A549 (cell line): ENCODE measurements at regions of chr10 and their contacts with region 1.

Region 1: GRCh38 chr10:97612386-97612785 is 20.9 kb downstream of the MORN4 start:
- DNase-seq: peak; percentile 70 to 85
- ATAC-seq: peak; percentile 97 to 98
- H3K4me3 ChIP-seq: no peak overlapping the region
- H3K27ac ChIP-seq: peak overlapping the region; percentile 13 to 75; a peak in 4 of 6 replicates
- H3K4me1 ChIP-seq: peaks cover 17% of the 10 kb centered on the region; the same call in 2 of the 3 replicates
- CTCF ChIP-seq: peak; percentile 85
- EP300 ChIP-seq: no peak
- POLR2A ChIP-seq: no peak
- RAD21 ChIP-seq: peak; percentile 95 to 98

Region 2: GRCh38 chr10:97334370-97335175 is 277.8 kb before region 1 on chr10 and contains the start of gene FRAT2:
- CTCF ChIA-PET with region 1: no interaction called
- POLR2A ChIA-PET with region 1: no interaction called
- DNase-seq: peak; percentile 91 to 96
- ATAC-seq: peak; percentile 86 to 89
- H3K4me3 ChIP-seq: peak within 1 kb of the TSS; percentile 87
- H3K27ac ChIP-seq: peak within 1 kb of the TSS; percentile 95 to 97
- H3K4me1 ChIP-seq: peaks cover 31% of the 10 kb centered on the region
- CTCF ChIP-seq: no peak
- EP300 ChIP-seq: no peak
- POLR2A ChIP-seq: peak; percentile 32; the same call in 1 of the 2 replicates
- RAD21 ChIP-seq: no peak
- polyA plus RNA-seq, gene FRAT2: 4.1 and 4.4 TPM in 2 replicates

Region 3: DNA sequence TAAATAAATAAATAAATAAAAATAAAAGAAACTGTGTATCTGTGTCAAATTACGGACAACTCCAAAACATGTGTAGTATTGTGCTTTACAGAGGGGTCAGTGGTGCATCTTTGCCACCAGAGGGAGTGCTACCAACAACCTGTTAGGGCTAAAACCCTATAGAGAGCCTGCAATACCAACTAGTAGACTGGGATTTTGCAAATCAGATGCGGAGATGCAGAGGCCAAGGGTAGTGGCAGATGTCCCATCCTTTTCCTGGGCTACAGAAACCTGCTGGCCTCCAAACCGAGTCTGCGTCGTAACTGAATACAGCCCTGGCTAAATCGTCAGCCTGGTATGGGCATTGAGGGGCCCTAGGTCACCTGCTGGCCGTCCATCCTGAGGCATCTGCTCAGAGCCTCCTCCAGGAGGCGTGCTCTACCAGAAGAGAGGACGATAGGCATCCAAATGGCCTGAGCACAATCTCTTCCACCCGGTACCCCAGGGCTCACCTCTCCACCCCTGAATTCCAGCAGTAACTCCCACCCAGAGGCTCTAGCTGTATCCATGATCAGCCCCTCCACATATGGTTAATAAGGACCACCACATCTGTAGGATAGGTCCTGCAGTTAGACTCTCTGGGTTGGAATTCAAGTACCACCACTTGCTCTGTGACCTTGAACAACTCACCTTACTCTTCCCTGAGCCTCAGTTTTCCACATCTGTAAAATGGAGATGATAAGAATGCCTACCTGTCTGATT is 205.0 kb before region 1 on chr10:
- CTCF ChIA-PET with region 1: interaction called, 23 read pairs
- POLR2A ChIA-PET with region 1: no interaction called
- DNase-seq: peak; percentile 87 to 93
- ATAC-seq: peak; percentile 99 to 100
- H3K4me3 ChIP-seq: peak overlapping the region; percentile 33; the same call in 2 of the 3 replicates
- H3K27ac ChIP-seq: peak overlapping the region; percentile 29 to 71; a peak in 4 of 6 replicates
- H3K4me1 ChIP-seq: 0 out of 3 replicates have a peak, but pooled peaks cover 4% of the 10 kb centered on the region
- CTCF ChIP-seq: peak; percentile 95
- EP300 ChIP-seq: no peak
- POLR2A ChIP-seq: no peak
- RAD21 ChIP-seq: peak; percentile 55 to 59

Region 4: GRCh38 chr10:97445357-97445721 is 167.0 kb before region 1 on chr10:
- CTCF ChIA-PET with region 1: interaction called, 10 read pairs
- POLR2A ChIA-PET with region 1: no interaction called
- DNase-seq: no peak
- ATAC-seq: peak; percentile 7 to 14; a peak in 4 of 6 replicates
- H3K4me3 ChIP-seq: peak overlapping the region; percentile 79
- H3K27ac ChIP-seq: peak overlapping the region; percentile 80 to 92
- H3K4me1 ChIP-seq: peaks cover 27% of the 10 kb centered on the region
- CTCF ChIP-seq: no peak
- EP300 ChIP-seq: no peak
- POLR2A ChIP-seq: no peak
- RAD21 ChIP-seq: no peak

Region 5: GRCh38 chr10:97463363-97464132 is 148.8 kb before region 1 on chr10:
- CTCF ChIA-PET with region 1: interaction called, 62 read pairs
- POLR2A ChIA-PET with region 1: no interaction called
- DNase-seq: peak; percentile 62 to 63
- ATAC-seq: peak; percentile 67 to 75; a peak in 5 of 6 replicates
- H3K4me3 ChIP-seq: no peak overlapping the region
- H3K27ac ChIP-seq: peak overlapping the region in 1 of 2 experiments; percentile 10; a peak in 1 of 6 replicates
- H3K4me1 ChIP-seq: peaks cover 8% of the 10 kb centered on the region
- CTCF ChIP-seq: peak; percentile 95
- EP300 ChIP-seq: no peak
- POLR2A ChIP-seq: no peak
- RAD21 ChIP-seq: peak; percentile 83 to 84

Region 6: DNA sequence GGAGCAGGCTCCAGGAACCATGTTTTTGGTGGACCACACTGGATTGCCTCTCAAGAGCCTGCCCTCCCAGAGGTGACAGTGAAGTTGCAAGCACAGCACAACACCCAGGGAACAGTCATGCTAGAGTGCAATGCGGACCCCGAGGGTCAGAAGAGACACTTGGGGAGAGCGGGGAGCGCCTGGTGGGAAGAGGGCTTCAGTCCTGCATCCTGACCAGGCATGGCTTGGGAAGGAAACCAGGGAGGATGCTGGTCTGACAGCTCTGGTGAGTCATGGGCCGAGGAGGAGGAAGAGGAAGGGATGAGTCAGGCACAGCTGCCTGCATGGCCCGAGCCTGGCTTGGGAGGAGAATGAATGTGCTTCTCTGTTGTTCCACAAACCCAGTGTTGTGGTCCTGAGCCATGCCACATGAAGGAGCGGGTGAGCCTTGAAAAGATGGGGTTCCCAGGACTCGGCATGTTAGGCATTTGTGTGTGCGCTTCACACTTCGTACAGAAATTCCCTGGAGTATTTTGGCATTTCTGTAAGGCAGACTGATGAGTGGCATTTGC is 69.3 kb before region 1 on chr10:
- CTCF ChIA-PET with region 1: interaction called, 14 read pairs
- POLR2A ChIA-PET with region 1: no interaction called
- DNase-seq: peak; percentile 76 to 95
- ATAC-seq: peak; percentile 69 to 86
- H3K4me3 ChIP-seq: no peak overlapping the region
- H3K27ac ChIP-seq: peak overlapping the region; percentile 86 to 92
- H3K4me1 ChIP-seq: peaks cover 57% of the 10 kb centered on the region
- CTCF ChIP-seq: no peak
- EP300 ChIP-seq: no peak
- POLR2A ChIP-seq: no peak
- RAD21 ChIP-seq: no peak

Region 7: GRCh38 chr10:97601268-97602215 is 10.8 kb before region 1 on chr10:
- CTCF ChIA-PET with region 1: interaction called, 1,048 read pairs
- POLR2A ChIA-PET with region 1: no interaction called
- DNase-seq: no peak
- ATAC-seq: no peak; a peak in 1 of 6 replicates
- H3K4me3 ChIP-seq: no peak overlapping the region
- H3K27ac ChIP-seq: peak overlapping the region; percentile 30 to 88; a peak in 3 of 6 replicates
- H3K4me1 ChIP-seq: peaks cover 20% of the 10 kb centered on the region
- CTCF ChIP-seq: no peak
- EP300 ChIP-seq: no peak
- POLR2A ChIP-seq: no peak
- RAD21 ChIP-seq: no peak

Region 8: DNA sequence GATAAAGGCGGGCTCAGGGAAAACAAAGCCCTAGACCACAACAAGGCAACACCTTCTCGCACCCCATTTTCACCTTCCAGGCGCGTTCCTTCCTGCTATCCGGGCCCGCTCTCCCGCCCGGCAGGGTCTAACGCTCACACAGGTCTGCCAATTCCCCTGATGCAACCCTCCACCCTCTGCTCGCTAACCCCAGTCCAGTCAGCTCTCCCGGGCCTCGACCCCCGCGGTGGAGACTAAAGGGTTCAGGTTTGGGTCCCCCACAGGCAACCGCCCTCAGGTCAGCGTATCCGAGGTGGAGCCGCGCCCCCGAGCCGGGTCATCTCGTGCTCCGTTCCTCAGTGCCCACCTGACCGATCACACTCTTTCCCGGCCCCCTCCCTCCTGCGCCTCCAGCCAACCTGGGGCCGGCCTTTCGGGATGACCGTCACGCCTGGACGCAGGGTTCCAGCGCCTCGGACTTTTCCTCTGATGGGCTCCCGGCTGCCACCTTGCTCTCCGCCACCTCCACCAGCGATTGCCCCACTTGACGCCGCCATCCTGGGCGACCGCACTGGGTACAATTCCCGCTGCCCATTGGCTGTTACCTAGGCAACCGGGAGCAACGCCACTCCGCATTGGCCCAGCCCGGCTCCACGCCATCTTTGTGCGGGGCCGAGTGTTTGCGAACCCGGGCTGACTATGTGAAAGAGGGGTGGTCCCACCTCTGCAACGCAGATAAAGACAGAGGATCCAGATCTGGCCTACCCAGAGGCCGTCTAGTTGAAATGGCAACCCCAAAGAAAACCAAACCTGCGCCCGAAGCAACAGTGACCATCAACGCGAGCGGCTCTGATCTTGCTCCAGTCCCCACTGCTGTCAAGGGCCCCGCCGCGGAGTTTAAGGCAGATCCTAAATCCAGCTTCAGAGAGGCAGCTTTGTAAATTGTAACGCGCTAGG is 20.8 kb after region 1 on chr10 and contains the start of gene MORN4:
- CTCF ChIA-PET with region 1: interaction called, 97 read pairs
- POLR2A ChIA-PET with region 1: no interaction called
- DNase-seq: peak; percentile 93 to 95
- ATAC-seq: peak; percentile 99
- H3K4me3 ChIP-seq: peak within 1 kb of the TSS; percentile 87
- H3K27ac ChIP-seq: peak within 1 kb of the TSS; percentile 91 to 92
- H3K4me1 ChIP-seq: peaks cover 7% of the 10 kb centered on the region; the same call in 2 of the 3 replicates
- CTCF ChIP-seq: no peak
- EP300 ChIP-seq: no peak
- POLR2A ChIP-seq: peak; percentile 60
- RAD21 ChIP-seq: no peak
- polyA plus RNA-seq, gene MORN4: 13.8 and 14.2 TPM in 2 replicates